ENCODE measurements at regions of chr3 and their contacts with region 1.

Region 1: GRCh38 chr3:11803977-11804892 is 42.5 kb downstream of the TAMM41 start:
- DNase-seq: peak in 31 of 35 experiments; percentile 2 to 68 (median 19)
- ATAC-seq: peak; percentile 70 to 83 (median 74)
- H3K4me3 ChIP-seq: no peak overlapping the region
- H3K4me3 Mint-ChIP-seq: no peak overlapping the region
- H3K27ac ChIP-seq: no peak overlapping the region
- H3K27ac Mint-ChIP-seq: no peak overlapping the region
- H3K4me1 ChIP-seq: no peaks in the 10 kb centered on the region
- H3K4me1 Mint-ChIP-seq: peaks cover 2 to 12% (median 8%) of the 10 kb centered on the region in 3 donors
- H3K27me3 ChIP-seq: no peaks in the 10 kb centered on the region
- H3K27me3 Mint-ChIP-seq: no peaks in the 10 kb centered on the region

Region 2: GRCh38 chr3:11606865-11607440 is 197.3 kb before region 1 on chr3:
- CTCF ChIA-PET with region 1: interaction called in 1 of 2 experiments, 10 read pairs
- POLR2A ChIA-PET with region 1: no interaction called
- DNase-seq: no peak
- ATAC-seq: no peak
- H3K4me3 ChIP-seq: no peak overlapping the region
- H3K4me3 Mint-ChIP-seq: no peak overlapping the region
- H3K27ac ChIP-seq: no peak overlapping the region
- H3K27ac Mint-ChIP-seq: peak overlapping the region; percentile 37 to 48
- H3K4me1 ChIP-seq: peaks cover 5 to 7% of the 10 kb centered on the region in 2 experiments
- H3K4me1 Mint-ChIP-seq: peaks cover 62 to 72% (median 64%) of the 10 kb centered on the region in 3 donors
- H3K27me3 ChIP-seq: no peaks in the 10 kb centered on the region
- H3K27me3 Mint-ChIP-seq: no peaks in the 10 kb centered on the region

Region 3: GRCh38 chr3:12040902-12041301 is 236.7 kb after region 1 on chr3:
- CTCF ChIA-PET with region 1: no interaction called
- POLR2A ChIA-PET with region 1: no interaction called
- DNase-seq: no peak
- ATAC-seq: no peak
- H3K4me3 ChIP-seq: no peak overlapping the region
- H3K4me3 Mint-ChIP-seq: no peak overlapping the region
- H3K27ac ChIP-seq: no peak overlapping the region
- H3K27ac Mint-ChIP-seq: no peak overlapping the region
- H3K4me1 ChIP-seq: no peaks in the 10 kb centered on the region
- H3K4me1 Mint-ChIP-seq: no peaks in the 10 kb centered on the region
- H3K27me3 ChIP-seq: peaks cover 2 to 8% of the 10 kb centered on the region in 2 experiments
- H3K27me3 Mint-ChIP-seq: peaks cover 28 to 34% of the 10 kb centered on the region in 2 donors

Region 4: DNA sequence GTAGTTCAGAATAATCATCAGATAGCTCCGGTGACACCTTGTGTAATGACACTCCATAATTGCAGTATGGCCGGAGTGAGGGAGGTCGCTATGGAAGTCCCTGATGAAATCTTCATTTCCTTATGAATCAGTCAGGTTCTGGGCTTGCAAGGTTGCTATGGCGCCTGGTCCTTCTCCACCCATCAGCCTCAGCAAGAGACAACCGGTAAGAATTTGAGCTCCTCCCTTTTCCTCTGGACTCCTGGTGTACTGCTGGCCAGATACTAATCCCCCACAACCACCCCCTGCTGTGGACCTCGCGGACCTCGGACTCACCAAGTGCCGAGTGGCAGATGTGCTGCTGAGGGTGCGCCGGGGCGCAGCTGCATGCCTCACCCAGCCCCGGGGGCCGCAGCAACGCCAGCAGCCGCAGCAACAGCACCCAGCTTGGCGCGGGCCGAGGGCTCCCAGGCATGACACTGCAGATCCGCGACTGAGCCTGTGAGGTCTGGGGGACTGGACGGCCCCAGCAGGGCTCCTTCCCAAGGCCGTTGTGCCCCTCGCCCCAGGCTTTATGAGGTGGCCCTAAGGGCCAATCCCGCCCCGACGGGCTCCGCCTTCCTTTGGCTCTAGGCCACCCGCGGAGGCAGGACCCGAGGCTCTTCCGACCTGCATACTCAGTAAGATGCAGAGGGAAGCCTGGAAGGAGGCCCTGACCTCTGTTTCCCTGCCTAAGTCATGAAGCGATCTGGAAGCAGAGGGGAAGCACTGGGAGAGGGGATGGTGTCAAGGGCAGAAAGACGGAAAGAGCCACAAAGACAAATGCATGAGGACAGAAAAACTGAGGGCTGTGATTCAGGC is 354.4 kb after region 1 on chr3 and contains the start of gene TIMP4:
- CTCF ChIA-PET with region 1: no interaction called
- POLR2A ChIA-PET with region 1: no interaction called
- DNase-seq: no peak
- ATAC-seq: no peak
- H3K4me3 ChIP-seq: peak within 1 kb of the TSS in 1 of 2 donors; percentile 67
- H3K4me3 Mint-ChIP-seq: peak within 1 kb of the TSS in 1 of 3 donors; percentile 29
- H3K27ac ChIP-seq: no peak within 1 kb of the TSS
- H3K27ac Mint-ChIP-seq: no peak within 1 kb of the TSS
- H3K4me1 ChIP-seq: peaks cover 2 to 6% of the 10 kb centered on the region in 2 experiments
- H3K4me1 Mint-ChIP-seq: peaks cover 0 to 2% (median 0%) of the 10 kb centered on the region in 3 donors
- H3K27me3 ChIP-seq: peaks cover 0 to 17% of the 10 kb centered on the region in 2 experiments
- H3K27me3 Mint-ChIP-seq: peaks cover 7 to 23% of the 10 kb centered on the region in 2 donors
- total RNA-seq, gene TIMP4: not detected

Region 5: GRCh38 chr3:13204177-13204581 is 1399.9 kb after region 1 on chr3:
- CTCF ChIA-PET with region 1: no interaction called
- POLR2A ChIA-PET with region 1: no interaction called
- DNase-seq: no peak
- ATAC-seq: peak in 1 of 4 experiments; percentile 29
- H3K4me3 ChIP-seq: no peak overlapping the region
- H3K4me3 Mint-ChIP-seq: peak overlapping the region in 1 of 3 donors; percentile 49
- H3K27ac ChIP-seq: no peak overlapping the region
- H3K27ac Mint-ChIP-seq: no peak overlapping the region
- H3K4me1 ChIP-seq: peaks cover 0 to 3% of the 10 kb centered on the region in 2 experiments
- H3K4me1 Mint-ChIP-seq: peaks cover 4 to 7% (median 4%) of the 10 kb centered on the region in 3 donors
- H3K27me3 ChIP-seq: peaks cover 4 to 72% of the 10 kb centered on the region in 2 experiments
- H3K27me3 Mint-ChIP-seq: peaks cover 55 to 61% of the 10 kb centered on the region in 2 donors

Measured in T-cell (primary cell).